K562 (cell line): ENCODE measurements at regions of chr9 and their contacts with region 1.

Region 1: GRCh38 chr9:130343445-130343918 is 77.9 kb downstream of the HMCN2 start:
- DNase-seq: peak; percentile 49 to 78 (median 64)
- ATAC-seq: peak; percentile 76
- H3K4me3 ChIP-seq: no peak overlapping the region
- H3K27ac ChIP-seq: no peak overlapping the region
- H3K4me1 ChIP-seq: peaks cover 0 to 38% of the 10 kb centered on the region in 2 experiments; a peak in 2 of 5 replicates
- H3K27me3 ChIP-seq: peaks cover 0 to 23% of the 10 kb centered on the region in 2 experiments; a peak in 3 of 5 replicates
- CTCF ChIP-seq: peak; percentile 71 to 82 (median 81)
- EP300 ChIP-seq: no peak
- POLR2A ChIP-seq: no peak
- RAD21 ChIP-seq: peak; percentile 65 to 74

Region 2: GRCh38 chr9:129665389-129665775 is 678.1 kb before region 1 on chr9 and contains the start of gene PRRX2:
- CTCF ChIA-PET with region 1: no interaction called
- POLR2A ChIA-PET with region 1: no interaction called
- in situ Hi-C with region 1: loop called (anchors 25 kb)
- intact Hi-C with region 1: no loop called
- DNase-seq: peak in 2 of 4 experiments; percentile 67 to 69
- ATAC-seq: peak; percentile 32; the same call in 2 of the 3 replicates
- H3K4me3 ChIP-seq: no peak within 1 kb of the TSS
- H3K27ac ChIP-seq: no peak within 1 kb of the TSS
- H3K4me1 ChIP-seq: peaks cover 0 to 28% of the 10 kb centered on the region in 2 experiments; a peak in 2 of 5 replicates
- H3K27me3 ChIP-seq: peaks cover 23 to 44% of the 10 kb centered on the region in 2 experiments
- CTCF ChIP-seq: no peak
- EP300 ChIP-seq: no peak
- POLR2A ChIP-seq: no peak
- RAD21 ChIP-seq: no peak
- polyA plus RNA-seq, gene PRRX2: not detected

Region 3: DNA sequence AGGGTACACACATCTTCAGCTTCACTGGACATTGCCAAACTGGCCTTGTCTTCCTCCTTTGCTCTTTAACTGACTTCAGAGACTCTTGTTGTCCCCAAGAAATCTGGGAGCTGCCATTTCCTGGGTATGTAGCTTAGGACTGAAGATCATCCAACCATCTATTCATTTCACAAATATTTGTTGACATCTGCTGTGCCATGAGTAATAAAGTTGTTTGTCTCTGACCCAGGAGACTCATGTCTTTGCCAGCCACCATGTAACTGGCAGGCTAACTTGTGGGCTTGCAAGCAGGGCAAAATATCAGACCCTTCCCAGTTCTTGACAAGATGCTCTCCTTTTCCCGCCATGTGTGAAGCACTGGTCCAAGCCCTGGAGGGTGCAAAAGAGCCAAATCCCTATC is 557.6 kb before region 1 on chr9:
- CTCF ChIA-PET with region 1: no interaction called
- POLR2A ChIA-PET with region 1: no interaction called
- in situ Hi-C with region 1: no loop called
- intact Hi-C with region 1: no loop called
- DNase-seq: no peak
- ATAC-seq: no peak
- H3K4me3 ChIP-seq: no peak overlapping the region
- H3K27ac ChIP-seq: no peak overlapping the region
- H3K4me1 ChIP-seq: peaks cover 15 to 24% of the 10 kb centered on the region in 2 experiments; a peak in 4 of 5 replicates
- H3K27me3 ChIP-seq: no peaks in the 10 kb centered on the region
- CTCF ChIP-seq: no peak
- EP300 ChIP-seq: no peak
- POLR2A ChIP-seq: no peak
- RAD21 ChIP-seq: no peak

Region 4: GRCh38 chr9:129944506-129945116 is 398.9 kb before region 1 on chr9:
- CTCF ChIA-PET with region 1: no interaction called
- POLR2A ChIA-PET with region 1: no interaction called
- in situ Hi-C with region 1: no loop called
- intact Hi-C with region 1: no loop called
- DNase-seq: no peak
- ATAC-seq: no peak
- H3K4me3 ChIP-seq: no peak overlapping the region
- H3K27ac ChIP-seq: no peak overlapping the region
- H3K4me1 ChIP-seq: no peaks in the 10 kb centered on the region
- H3K27me3 ChIP-seq: no peaks in the 10 kb centered on the region
- CTCF ChIP-seq: no peak
- EP300 ChIP-seq: no peak
- POLR2A ChIP-seq: no peak
- RAD21 ChIP-seq: no peak

Region 5: DNA sequence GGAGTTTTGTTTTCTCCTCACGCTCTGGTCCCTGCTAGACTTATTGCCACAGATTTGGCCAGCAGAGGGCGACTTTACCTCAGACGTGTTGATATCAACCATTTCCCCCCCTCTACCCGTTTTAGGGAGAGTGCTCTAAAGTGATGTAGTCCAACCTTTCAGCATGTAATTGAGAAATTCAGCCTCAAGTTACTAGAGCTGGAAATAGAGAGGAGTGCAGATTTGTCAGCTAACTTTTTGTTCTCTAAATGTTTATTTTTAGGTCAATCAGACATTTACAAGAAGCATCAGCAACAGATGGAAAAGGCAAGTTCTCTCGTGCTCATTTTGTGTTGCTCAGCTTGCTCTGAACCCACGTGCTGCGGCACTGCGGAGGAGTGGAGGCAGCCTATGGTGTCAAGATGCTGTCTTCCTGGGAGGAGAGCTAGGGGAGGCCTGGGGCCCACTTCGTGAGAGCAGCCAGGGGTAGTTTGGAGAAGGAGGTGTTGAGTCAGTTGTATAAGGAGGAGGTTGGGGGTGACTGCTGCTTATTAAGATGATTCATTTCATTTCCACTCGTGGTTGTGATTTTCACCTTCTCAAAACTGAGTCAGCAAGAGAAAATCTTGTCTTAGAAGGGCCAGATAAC is 236.1 kb before region 1 on chr9:
- CTCF ChIA-PET with region 1: interaction called, 11 read pairs
- POLR2A ChIA-PET with region 1: interaction called, 3 read pairs
- in situ Hi-C with region 1: loop called (anchors 5 kb)
- intact Hi-C with region 1: loop called (anchors 2 kb)
- DNase-seq: peak; percentile 74 to 86 (median 75)
- ATAC-seq: peak; percentile 96
- H3K4me3 ChIP-seq: no peak overlapping the region
- H3K27ac ChIP-seq: no peak overlapping the region
- H3K4me1 ChIP-seq: peaks cover 6 to 10% of the 10 kb centered on the region in 2 experiments
- H3K27me3 ChIP-seq: no peaks in the 10 kb centered on the region
- CTCF ChIP-seq: peak; percentile 72 to 89 (median 82)
- EP300 ChIP-seq: no peak
- POLR2A ChIP-seq: no peak
- RAD21 ChIP-seq: peak; percentile 80 to 93

Region 6: DNA sequence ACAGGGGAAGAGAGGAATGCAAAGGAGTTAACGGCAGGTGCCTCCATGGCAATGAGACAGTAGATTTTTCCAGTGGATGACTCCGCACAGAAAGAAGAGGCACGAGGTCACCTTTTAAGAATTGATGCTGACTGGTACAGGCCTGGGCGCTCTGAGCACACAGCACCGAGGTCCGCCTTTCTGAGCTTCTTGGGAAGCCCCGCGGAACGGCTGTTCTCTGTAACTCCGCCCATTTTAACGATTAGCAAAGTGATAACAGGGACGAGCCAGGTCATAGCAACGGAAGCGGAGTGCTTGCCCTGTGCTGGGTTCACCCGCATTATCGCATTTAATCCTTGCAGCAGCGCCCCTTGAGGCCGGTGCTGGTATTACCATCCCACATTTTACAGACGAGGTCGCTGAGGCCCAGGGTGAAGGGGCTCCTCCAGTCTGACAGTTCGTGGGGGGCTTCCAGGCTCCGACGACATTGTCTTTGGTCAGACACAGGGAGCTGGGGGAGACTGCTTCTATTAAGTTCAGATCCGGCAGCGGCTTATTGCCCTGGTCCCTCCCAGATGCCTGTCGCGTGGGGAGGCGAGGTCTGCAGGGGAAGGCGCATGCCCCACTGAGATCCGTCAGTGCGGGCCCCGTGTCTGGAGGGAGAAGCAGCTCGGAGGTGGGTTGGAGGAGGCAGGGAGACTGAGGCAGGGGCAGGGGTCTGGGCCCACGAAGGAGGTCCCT is 100.3 kb before region 1 on chr9:
- CTCF ChIA-PET with region 1: no interaction called
- POLR2A ChIA-PET with region 1: no interaction called
- in situ Hi-C with region 1: no loop called
- intact Hi-C with region 1: loop called (anchors 10 kb)
- DNase-seq: peak; percentile 74 to 85 (median 83)
- ATAC-seq: peak; percentile 82
- H3K4me3 ChIP-seq: no peak overlapping the region
- H3K27ac ChIP-seq: peak overlapping the region; percentile 28; the same call in 1 of the 3 replicates
- H3K4me1 ChIP-seq: peaks cover 13 to 22% of the 10 kb centered on the region in 2 experiments
- H3K27me3 ChIP-seq: no peaks in the 10 kb centered on the region
- CTCF ChIP-seq: peak; percentile 84 to 93 (median 85)
- EP300 ChIP-seq: peak; percentile 27; the same call in 1 of the 2 replicates
- POLR2A ChIP-seq: no peak
- RAD21 ChIP-seq: peak; percentile 19 to 44; a peak in 2 of 4 replicates